ENCODE measurements at regions of chr6 and their contacts with region 1.

Region 1: DNA sequence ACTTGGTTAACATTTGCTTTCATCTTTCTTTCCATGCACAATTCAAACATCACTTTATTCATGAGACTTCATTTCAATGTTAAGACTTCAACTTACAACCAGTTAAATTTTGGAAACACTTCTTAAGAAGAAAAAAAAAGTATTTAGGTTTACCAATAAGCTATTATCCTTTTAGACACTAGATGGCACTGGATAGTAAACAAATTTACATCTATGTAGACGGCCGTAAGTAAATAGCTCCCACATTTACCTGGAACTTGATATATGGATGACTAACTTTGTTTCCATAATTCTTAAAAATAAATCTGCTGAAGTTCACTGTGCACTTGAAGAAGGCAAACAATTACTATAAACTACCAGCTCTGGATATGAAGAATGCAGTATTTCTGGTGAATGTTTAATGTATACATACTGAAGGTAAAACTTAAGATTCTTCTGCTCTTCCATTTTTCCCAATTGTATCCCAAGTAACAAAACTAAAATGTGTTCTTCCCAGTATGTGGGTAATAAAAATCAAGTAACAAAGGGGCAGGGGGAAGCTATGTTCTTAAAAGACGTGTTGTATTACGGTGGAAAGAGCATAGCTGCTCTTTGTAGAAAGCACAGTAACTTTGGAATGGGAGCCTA is 130.6 kb upstream of the C6orf118 start:
- DNase-seq: no peak
- ATAC-seq: no peak

Region 2: DNA sequence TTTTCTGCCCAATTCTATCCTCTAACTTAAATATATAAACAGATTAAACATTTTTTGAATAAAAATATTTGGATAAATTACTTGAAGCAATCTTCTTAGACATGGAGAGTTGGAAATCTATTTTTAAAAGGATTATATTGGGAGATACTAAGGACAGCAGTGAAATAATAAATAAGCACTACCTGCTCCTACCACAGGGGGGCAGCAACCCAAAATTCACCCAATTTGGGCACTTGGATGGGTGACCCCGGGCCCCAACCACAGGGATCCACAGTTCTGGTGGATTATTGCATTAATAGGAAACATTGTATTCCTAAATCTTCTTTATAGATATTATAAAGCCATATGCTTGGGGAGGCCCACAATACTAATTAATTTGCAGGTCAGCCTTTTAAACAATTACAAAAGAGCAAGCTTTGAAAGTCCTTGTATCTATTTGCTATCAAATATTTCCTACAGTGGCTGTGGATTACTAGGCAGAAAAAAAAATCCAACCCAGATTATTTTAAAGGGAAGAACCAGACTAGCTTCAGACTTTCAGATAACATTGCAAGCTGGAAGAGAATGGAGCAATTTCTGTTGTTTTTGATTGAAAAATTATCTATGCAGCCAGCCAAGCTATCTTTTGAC is 289.4 kb after region 1 on chr6:
- intact Hi-C with region 1: loop called (anchors 5 kb)
- DNase-seq: no peak
- ATAC-seq: no peak

Region 3: DNA sequence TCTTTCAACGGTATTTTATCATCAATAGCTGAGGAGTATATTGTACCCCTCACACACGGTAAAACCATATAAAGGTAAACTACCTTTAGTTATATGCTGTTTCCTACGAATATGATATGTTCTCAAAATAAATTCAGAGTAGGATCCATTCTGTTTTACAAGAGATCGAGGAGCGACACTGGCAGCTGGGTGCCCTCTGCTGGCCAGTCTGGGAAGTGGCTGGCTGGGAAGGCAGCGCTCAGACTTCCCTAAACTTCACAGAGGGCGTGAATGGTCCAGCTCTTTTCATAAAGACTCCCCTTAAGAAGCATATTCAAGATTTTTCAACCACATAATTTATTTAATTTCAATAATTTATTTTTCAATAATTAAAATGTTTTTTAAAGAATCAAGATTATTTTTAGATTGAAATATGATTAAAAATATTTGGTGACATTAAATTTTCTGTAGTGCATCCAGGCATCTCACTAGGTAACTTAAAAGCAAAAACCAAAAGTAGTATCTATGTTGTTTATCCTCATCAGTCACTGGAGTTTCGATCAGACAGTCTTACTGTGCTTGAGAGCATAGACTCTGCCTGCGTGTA is 410.5 kb after region 1 on chr6:
- intact Hi-C with region 1: loop called (anchors 1 kb)
- DNase-seq: no peak
- ATAC-seq: peak; percentile 68

Region 4: GRCh38 chr6:166106076-166106686 is 666.1 kb after region 1 on chr6:
- intact Hi-C with region 1: loop called (anchors 10 kb)
- DNase-seq: peak; percentile 75
- ATAC-seq: peak; percentile 83

Measured in Right ventricle myocardium inferior (tissue), 1 donor.